Heart right ventricle (tissue), 16 donors: ENCODE measurements at regions of chr9 and their contacts with region 1.

Region 1: GRCh38 chr9:31210978-31211570 is 1173.4 kb upstream of the ACO1 start:
- DNase-seq: no peak
- ATAC-seq: no peak
- H3K4me3 ChIP-seq: no peak overlapping the region
- H3K27ac ChIP-seq: no peak overlapping the region
- H3K4me1 ChIP-seq: peaks cover 0 to 7% (median 0%) of the 10 kb centered on the region in 9 donors
- H3K27me3 ChIP-seq: no peaks in the 10 kb centered on the region
- CTCF ChIP-seq: no peak

Region 2: DNA sequence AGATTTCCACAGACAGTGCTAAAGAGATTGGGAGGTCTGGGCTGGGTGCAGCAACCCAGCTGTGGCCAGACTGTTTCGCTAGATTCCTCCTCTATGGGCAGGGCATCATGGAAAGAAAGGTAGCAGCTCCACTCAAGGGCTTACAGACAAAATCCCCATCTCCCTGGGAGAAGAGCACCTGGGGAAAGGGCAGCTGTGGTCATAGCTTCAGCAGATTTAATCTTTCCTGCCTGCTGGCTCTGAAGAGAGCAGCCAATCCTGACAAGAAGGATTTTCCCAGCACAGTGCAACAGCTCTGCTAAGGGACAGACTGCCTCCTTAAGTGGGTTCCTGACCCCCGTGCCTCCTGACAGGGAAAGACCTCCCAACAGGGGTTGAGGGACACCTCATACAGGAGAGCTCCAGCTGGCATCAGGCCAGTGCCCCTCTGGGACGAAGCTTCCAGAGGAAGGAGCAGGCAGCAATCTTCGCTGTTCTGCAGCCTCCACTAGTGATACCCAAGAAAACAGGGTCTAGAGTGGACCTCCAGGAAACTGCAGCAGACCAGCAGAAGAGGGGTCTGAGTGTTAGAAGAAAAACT is 205.9 kb before region 1 on chr9:
- intact Hi-C with region 1: no loop called
- DNase-seq: no peak
- ATAC-seq: no peak
- H3K4me3 ChIP-seq: no peak overlapping the region
- H3K27ac ChIP-seq: no peak overlapping the region
- H3K4me1 ChIP-seq: no peaks in the 10 kb centered on the region
- H3K27me3 ChIP-seq: no peaks in the 10 kb centered on the region
- CTCF ChIP-seq: no peak

Region 3: GRCh38 chr9:31153250-31153840 is 57.7 kb before region 1 on chr9:
- intact Hi-C with region 1: loop called in 1 of 10 experiments (anchors 10 kb)
- DNase-seq: no peak
- ATAC-seq: no peak
- H3K4me3 ChIP-seq: no peak overlapping the region
- H3K27ac ChIP-seq: no peak overlapping the region
- H3K4me1 ChIP-seq: no peaks in the 10 kb centered on the region
- H3K27me3 ChIP-seq: no peaks in the 10 kb centered on the region
- CTCF ChIP-seq: no peak

Region 4: GRCh38 chr9:31259824-31260223 is 48.8 kb after region 1 on chr9:
- intact Hi-C with region 1: loop called in 1 of 10 experiments (anchors 10 kb)
- DNase-seq: no peak
- ATAC-seq: no peak
- H3K4me3 ChIP-seq: no peak overlapping the region
- H3K27ac ChIP-seq: no peak overlapping the region
- H3K4me1 ChIP-seq: no peaks in the 10 kb centered on the region
- H3K27me3 ChIP-seq: no peaks in the 10 kb centered on the region
- CTCF ChIP-seq: no peak

Region 5: GRCh38 chr9:31355965-31356364 is 144.9 kb after region 1 on chr9:
- intact Hi-C with region 1: loop called in 1 of 10 experiments (anchors 10 kb)
- DNase-seq: no peak
- ATAC-seq: no peak
- H3K4me3 ChIP-seq: no peak overlapping the region
- H3K27ac ChIP-seq: no peak overlapping the region
- H3K4me1 ChIP-seq: no peaks in the 10 kb centered on the region
- H3K27me3 ChIP-seq: no peaks in the 10 kb centered on the region
- CTCF ChIP-seq: no peak